ENCODE measurements at regions of chr10 and their contacts with region 1.

Region 1: DNA sequence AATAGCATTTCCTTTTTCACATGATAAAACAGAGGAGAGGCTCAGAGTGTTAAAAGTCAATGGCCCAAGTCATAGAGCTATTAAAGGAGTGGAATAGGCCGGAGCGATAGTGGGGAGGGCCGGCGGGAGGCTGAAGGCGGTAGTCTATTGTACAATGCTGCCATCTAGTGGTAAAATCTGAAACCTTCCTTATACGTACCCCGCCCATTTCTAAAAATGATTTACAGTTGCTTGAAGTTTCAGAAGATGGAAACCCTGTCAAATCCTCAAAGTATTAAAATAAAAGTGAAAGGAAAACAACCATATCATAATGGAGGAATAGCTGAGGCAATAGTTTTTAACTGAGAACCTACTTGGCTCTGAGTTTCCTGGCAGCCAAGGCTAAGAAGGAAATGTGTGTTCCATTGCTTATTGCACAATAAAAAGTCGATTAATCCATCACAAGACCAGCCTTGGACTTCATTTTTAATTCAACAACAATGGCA is 209.1 kb downstream of the CCSER2 start:
- DNase-seq: peak; percentile 21
- H3K4me3 ChIP-seq: no peak overlapping the region
- H3K27ac ChIP-seq: no peak overlapping the region
- H3K27me3 ChIP-seq: no peaks in the 10 kb centered on the region
- CTCF ChIP-seq: peak; percentile 77

Region 2: DNA sequence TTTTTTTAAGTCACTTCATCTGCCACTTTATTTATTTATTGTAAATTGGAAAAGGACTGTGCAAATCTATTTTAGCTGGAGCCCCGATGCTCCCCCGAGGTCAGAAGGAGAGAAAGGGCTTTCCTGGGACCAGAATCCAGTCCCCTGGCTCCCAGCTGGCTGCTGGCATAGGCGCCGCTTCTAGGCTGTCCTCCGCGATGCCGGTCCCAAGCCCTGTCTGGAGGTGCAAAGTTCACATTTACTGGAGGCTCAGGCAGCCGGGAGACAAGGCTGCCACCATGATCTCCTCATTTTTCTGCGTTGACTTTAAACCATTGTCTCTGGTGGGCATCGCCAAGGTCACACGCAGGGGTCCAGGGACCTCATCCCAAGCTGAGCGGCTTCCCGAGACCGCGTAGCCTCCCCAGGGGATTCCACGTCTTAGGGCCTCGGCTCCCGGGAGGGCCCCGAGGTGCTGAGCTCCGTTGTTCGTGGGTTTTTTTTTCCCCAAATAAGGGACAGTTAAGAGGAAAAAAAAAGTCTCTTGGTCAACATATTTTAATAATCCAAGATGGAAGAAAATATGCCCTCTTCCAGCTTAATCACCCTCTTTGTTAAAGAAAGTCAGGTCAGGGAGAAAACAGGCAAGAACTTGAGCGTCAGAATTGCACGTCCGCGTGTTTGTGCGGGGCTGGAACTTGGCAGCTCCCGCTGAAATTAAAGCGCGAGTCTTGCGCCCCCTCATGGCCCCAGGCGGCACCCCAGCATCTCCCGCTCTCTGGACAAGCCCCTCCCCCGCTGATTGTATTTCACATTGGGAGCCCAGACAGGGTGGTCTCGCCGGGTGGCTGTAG is 280.8 kb before region 1 on chr10:
- CTCF ChIA-PET with region 1: interaction called, 427 read pairs
- POLR2A ChIA-PET with region 1: no interaction called
- DNase-seq: no peak
- H3K4me3 ChIP-seq: no peak overlapping the region
- H3K27ac ChIP-seq: no peak overlapping the region
- H3K27me3 ChIP-seq: peaks cover 4% of the 10 kb centered on the region
- CTCF ChIP-seq: peak; percentile 76

Region 3: DNA sequence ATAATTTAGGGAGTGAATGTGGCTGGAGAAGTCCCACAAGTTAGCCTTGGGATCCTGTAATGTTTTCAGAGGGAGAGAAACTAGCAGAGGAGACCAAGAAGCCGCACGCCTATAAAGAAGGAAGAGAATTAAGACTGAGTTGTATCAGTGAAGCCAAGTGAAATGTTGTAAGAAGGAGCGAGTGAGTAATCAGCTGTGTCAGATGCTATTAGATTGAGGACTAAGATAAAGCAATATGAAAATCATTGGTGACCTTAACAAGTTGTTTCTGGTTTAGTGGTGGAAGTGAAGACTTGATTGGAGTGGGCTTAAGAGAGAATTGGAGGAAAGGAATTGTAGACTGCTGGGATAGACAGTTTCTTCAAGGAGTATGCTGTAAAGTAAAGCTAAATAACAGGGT is 200.3 kb before region 1 on chr10:
- CTCF ChIA-PET with region 1: interaction called, 17 read pairs
- POLR2A ChIA-PET with region 1: no interaction called
- DNase-seq: no peak
- H3K4me3 ChIP-seq: no peak overlapping the region
- H3K27ac ChIP-seq: peak overlapping the region; percentile 43
- H3K27me3 ChIP-seq: no peaks in the 10 kb centered on the region
- CTCF ChIP-seq: no peak

Region 4: DNA sequence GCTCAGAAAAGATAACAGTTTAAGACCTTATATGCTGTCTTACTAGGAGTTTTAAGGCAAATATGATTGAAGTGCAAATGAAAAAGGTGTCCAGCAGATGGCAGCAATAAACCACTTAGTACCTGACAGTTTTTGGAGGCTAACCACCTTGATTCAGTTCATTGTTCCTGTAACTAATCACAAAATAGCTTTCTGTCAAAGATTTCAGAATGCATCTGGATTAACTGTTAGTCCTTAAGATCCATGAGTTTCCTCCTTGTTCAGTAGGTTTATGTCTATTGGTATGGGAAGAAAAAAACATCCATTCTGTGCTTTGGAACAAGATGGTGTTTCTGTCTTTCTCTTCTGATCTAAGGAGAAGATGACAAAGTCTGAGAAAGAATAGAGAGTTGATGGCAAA is 162.5 kb before region 1 on chr10:
- CTCF ChIA-PET with region 1: interaction called, 234 read pairs
- POLR2A ChIA-PET with region 1: no interaction called
- DNase-seq: peak; percentile 34
- H3K4me3 ChIP-seq: no peak overlapping the region
- H3K27ac ChIP-seq: no peak overlapping the region
- H3K27me3 ChIP-seq: no peaks in the 10 kb centered on the region
- CTCF ChIP-seq: peak; percentile 72

Region 5: GRCh38 chr10:84429926-84430520 is 107.5 kb before region 1 on chr10:
- CTCF ChIA-PET with region 1: interaction called, 41 read pairs
- POLR2A ChIA-PET with region 1: interaction called, 3 read pairs
- DNase-seq: no peak
- H3K4me3 ChIP-seq: no peak overlapping the region
- H3K27ac ChIP-seq: no peak overlapping the region
- H3K27me3 ChIP-seq: no peaks in the 10 kb centered on the region
- CTCF ChIP-seq: peak; percentile 67

Region 6: GRCh38 chr10:84525120-84525806 is 12.2 kb before region 1 on chr10:
- CTCF ChIA-PET with region 1: interaction called, 15 read pairs
- POLR2A ChIA-PET with region 1: no interaction called
- DNase-seq: no peak
- H3K4me3 ChIP-seq: no peak overlapping the region
- H3K27ac ChIP-seq: no peak overlapping the region
- H3K27me3 ChIP-seq: no peaks in the 10 kb centered on the region
- CTCF ChIP-seq: no peak

Region 7: GRCh38 chr10:84654671-84655070 is 117.2 kb after region 1 on chr10:
- CTCF ChIA-PET with region 1: no interaction called
- POLR2A ChIA-PET with region 1: no interaction called
- DNase-seq: no peak
- H3K4me3 ChIP-seq: no peak overlapping the region
- H3K27ac ChIP-seq: no peak overlapping the region
- H3K27me3 ChIP-seq: no peaks in the 10 kb centered on the region
- CTCF ChIP-seq: no peak

Measured in AG04450 (cell line).